A673 (cell line): ENCODE measurements at regions of chr3 and their contacts with region 1.

Region 1: DNA sequence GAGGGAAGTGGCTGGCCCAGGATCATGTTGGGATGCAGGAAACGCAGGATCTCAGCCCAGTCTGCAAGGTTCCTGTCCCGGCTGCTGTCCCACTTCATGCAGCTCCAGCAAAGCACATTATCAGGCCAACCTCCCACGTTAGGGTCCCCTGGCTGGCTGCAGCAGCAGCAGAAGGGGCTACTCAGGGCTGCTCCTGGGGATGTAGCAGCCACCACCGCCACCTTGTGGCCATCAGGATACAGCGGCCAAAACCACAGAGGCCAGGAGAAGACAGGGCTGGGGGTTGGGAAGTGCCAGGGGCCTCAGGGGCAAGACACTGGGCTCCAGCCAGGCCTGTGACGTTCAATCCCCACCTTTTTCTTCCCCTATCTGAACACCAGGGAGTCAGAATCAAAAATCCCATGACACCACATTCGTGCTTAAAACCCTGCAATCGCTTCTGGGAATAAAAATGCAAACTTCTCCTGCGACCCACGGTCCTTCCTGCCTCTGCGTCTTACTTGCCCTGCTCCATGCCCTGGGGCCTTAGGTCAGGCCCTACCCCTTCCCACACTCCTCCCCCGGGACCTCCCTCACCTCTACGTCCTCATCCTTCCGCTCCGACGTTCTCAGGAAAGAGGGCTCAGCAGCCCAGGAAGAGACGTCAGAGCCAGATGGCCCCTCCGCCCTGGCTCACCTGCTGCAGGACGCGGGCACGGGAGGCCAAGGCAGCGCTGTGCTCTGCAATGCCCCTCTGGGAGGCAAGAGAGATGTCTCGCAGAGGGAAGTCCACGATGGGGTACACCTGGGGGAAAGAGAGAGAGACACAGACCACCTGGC is 21.5 kb downstream of the SSUH2 start:
- DNase-seq: peak; percentile 78
- H3K4me3 ChIP-seq: no peak overlapping the region
- H3K27ac ChIP-seq: no peak overlapping the region
- H3K4me1 ChIP-seq: no peaks in the 10 kb centered on the region
- H3K27me3 ChIP-seq: no peaks in the 10 kb centered on the region
- CTCF ChIP-seq: peak; percentile 96

Region 2: GRCh38 chr3:8313560-8314267 is 309.4 kb before region 1 on chr3:
- CTCF ChIA-PET with region 1: interaction called, 3 read pairs
- POLR2A ChIA-PET with region 1: no interaction called
- intact Hi-C with region 1: loop called (anchors 5 kb)
- DNase-seq: no peak
- H3K4me3 ChIP-seq: no peak overlapping the region
- H3K27ac ChIP-seq: peak overlapping the region; percentile 96
- H3K4me1 ChIP-seq: peaks cover 56% of the 10 kb centered on the region
- H3K27me3 ChIP-seq: no peaks in the 10 kb centered on the region
- CTCF ChIP-seq: no peak

Region 3: GRCh38 chr3:8423307-8423706 is 199.8 kb before region 1 on chr3:
- CTCF ChIA-PET with region 1: interaction called, 4 read pairs
- POLR2A ChIA-PET with region 1: no interaction called
- intact Hi-C with region 1: loop called (anchors 2 kb)
- DNase-seq: no peak
- H3K4me3 ChIP-seq: no peak overlapping the region
- H3K27ac ChIP-seq: no peak overlapping the region
- H3K4me1 ChIP-seq: peaks cover 18% of the 10 kb centered on the region
- H3K27me3 ChIP-seq: no peaks in the 10 kb centered on the region
- CTCF ChIP-seq: peak; percentile 35

Region 4: DNA sequence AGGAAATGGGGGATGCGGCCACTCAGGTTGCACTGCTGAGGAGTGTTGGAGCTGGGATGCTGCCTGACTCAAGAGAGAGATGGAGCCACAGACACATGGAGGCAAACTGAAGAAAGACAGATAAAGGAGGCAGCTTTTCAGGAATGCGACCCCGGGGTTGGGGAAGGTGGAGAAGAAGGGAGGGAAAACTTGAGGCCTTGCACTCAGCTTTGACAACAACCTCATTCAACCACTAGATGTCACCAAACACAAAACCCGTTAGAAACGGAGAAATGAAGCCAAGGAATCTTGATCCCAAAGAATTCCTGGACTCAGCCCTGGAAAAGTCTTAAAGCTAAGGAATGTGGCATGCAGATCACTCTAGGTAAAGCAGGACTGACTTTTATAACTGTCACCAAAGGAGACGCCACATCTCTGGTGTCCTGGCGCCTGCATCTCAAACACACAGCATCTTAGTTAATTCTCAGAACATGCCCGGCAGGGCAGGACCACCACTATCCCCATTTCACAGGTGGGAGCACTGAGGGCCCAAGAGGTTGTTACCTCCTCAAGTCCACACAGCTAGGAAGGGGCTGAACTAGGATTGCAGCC is 181.0 kb before region 1 on chr3:
- CTCF ChIA-PET with region 1: interaction called, 4 read pairs
- POLR2A ChIA-PET with region 1: no interaction called
- intact Hi-C with region 1: loop called (anchors 1 kb)
- DNase-seq: peak; percentile 65
- H3K4me3 ChIP-seq: no peak overlapping the region
- H3K27ac ChIP-seq: no peak overlapping the region
- H3K4me1 ChIP-seq: peaks cover 18% of the 10 kb centered on the region
- H3K27me3 ChIP-seq: no peaks in the 10 kb centered on the region
- CTCF ChIP-seq: peak; percentile 77

Region 5: GRCh38 chr3:8610951-8611350 is 12.1 kb before region 1 on chr3:
- CTCF ChIA-PET with region 1: interaction called, 12 read pairs
- POLR2A ChIA-PET with region 1: no interaction called
- intact Hi-C with region 1: no loop called
- DNase-seq: no peak
- H3K4me3 ChIP-seq: no peak overlapping the region
- H3K27ac ChIP-seq: no peak overlapping the region
- H3K4me1 ChIP-seq: no peaks in the 10 kb centered on the region
- H3K27me3 ChIP-seq: no peaks in the 10 kb centered on the region
- CTCF ChIP-seq: no peak